GM12878 (cell line): ENCODE measurements at regions of chr17 and their contacts with region 1.

Region 1: DNA sequence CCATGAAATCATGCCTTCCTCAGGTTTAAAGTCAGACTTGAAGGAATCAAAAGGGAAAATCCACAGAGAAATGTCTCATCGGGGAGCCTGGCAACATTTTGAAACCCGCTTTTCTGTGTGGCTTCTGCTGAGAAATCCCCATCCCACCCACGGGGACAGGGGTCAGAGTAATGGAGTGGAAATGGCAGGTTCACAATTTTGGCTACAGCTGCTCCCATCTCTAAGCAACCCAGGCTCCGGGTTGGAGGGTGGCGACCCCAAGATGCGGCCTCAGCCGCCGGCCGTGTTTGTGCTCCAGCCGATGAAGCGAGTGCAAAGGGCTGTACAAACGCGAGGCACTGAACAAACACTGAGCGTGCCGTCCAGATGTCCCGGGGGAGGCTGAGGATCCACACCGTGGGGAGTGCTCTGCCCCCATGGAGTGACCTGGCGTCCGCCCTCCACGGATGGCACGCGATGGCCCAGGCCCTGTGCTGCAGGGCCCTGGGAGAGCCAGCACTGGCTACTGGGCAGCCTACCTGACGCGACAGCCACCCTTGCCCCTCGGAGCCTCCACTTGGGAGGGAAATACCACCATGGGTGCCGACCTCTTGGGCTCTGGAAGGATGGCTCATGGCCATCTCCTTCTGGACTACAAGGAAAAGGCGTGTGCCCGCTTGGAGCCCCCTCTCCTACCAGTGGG is 22.1 kb downstream of the SLC43A2 start:
- DNase-seq: no peak
- ATAC-seq: peak; percentile 55
- H3K4me3 ChIP-seq: no peak overlapping the region
- H3K27ac ChIP-seq: peak overlapping the region; percentile 85
- H3K4me1 ChIP-seq: peaks cover 32% of the 10 kb centered on the region
- H3K27me3 ChIP-seq: no peaks in the 10 kb centered on the region
- CTCF ChIP-seq: no peak
- EP300 ChIP-seq: peak in 1 of 2 experiments; percentile 17; a peak in 1 of 4 replicates
- POLR2A ChIP-seq: peak; percentile 56; the same call in 1 of the 2 replicates
- RAD21 ChIP-seq: no peak

Region 2: DNA sequence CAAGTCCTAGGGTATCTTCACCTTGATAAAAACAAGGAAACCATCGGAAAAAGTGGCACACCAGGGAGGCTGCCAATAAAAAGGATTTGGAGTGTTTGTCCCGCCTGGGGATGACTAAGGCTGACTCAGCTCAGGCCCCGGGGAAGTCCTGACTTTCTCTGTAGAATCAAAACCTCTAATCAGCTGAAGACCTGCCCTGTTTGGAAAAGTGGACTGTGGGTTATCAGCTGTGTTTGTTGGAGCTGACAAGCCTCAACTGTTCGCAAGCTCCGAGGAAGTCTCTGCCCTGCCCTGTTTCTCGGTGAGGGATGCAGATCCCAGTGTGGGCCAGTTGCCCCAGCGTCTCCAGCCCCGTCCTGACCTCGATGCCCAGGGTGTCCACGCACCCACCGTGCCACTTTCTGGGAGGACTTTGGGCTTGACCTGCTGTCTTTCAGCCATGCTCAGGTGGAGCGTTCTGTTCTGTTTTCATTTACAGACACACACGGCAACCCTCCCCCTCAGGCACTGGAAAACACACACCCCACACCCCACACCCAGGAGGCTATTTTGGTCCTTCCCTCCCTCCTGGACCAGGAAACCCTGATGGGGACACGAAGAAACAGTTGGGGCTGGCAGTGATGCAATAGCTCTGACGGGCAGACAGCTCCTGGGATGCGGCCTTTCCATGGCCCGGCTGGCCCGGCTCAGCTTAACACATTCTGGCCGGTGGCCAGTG is 16.3 kb before region 1 on chr17:
- CTCF ChIA-PET with region 1: interaction called, 3 read pairs
- POLR2A ChIA-PET with region 1: interaction called, 8 read pairs
- RAD21 ChIA-PET with region 1: interaction called, 20 read pairs
- SMC1A ChIA-PET with region 1: interaction called, 16 read pairs
- in situ Hi-C with region 1: no loop called
- intact Hi-C with region 1: no loop called
- DNase-seq: no peak
- ATAC-seq: no peak
- H3K4me3 ChIP-seq: no peak overlapping the region
- H3K27ac ChIP-seq: no peak overlapping the region; the same call in 1 of the 2 replicates
- H3K4me1 ChIP-seq: peaks cover 13% of the 10 kb centered on the region
- H3K27me3 ChIP-seq: no peaks in the 10 kb centered on the region
- CTCF ChIP-seq: no peak
- EP300 ChIP-seq: no peak
- POLR2A ChIP-seq: no peak
- RAD21 ChIP-seq: no peak